ENCODE measurements at regions of chr16 and their contacts with region 1.

Region 1: GRCh38 chr16:11105038-11105903 is 150.7 kb downstream of the SOCS1 start:
- DNase-seq: peak in 2 of 3 donors; percentile 51 to 61
- ATAC-seq: peak; percentile 79 to 82
- H3K4me3 ChIP-seq: no peak overlapping the region
- H3K27ac ChIP-seq: peak overlapping the region; percentile 84
- H3K4me1 ChIP-seq: peaks cover 19% of the 10 kb centered on the region
- H3K27me3 ChIP-seq: no peaks in the 10 kb centered on the region

Region 2: DNA sequence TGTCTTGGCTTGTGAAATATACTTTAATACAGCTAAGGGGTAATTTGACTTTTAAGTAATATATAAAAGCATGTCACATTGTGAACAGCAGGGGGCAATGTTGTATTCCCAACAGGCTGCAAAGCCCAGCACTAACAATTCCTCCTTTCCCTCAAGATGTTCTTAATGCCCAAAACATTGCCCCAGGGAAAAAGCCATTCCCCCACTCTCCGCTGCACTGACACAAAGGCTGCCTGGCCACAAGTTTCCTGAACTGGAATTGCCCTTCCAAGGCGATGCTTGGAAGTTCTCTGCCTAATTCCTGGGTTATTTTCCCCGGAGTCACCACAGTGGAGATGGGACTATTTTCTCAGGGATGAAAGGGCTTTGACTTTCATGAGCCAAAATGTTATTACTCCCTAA is 133.7 kb before region 1 on chr16:
- intact Hi-C with region 1: loop called in 1 of 4 experiments (anchors 10 kb)
- DNase-seq: peak in 1 of 3 donors; percentile 32
- ATAC-seq: peak; percentile 61 to 68
- H3K4me3 ChIP-seq: no peak overlapping the region
- H3K27ac ChIP-seq: no peak overlapping the region
- H3K4me1 ChIP-seq: peaks cover 3% of the 10 kb centered on the region
- H3K27me3 ChIP-seq: no peaks in the 10 kb centered on the region

Region 3: DNA sequence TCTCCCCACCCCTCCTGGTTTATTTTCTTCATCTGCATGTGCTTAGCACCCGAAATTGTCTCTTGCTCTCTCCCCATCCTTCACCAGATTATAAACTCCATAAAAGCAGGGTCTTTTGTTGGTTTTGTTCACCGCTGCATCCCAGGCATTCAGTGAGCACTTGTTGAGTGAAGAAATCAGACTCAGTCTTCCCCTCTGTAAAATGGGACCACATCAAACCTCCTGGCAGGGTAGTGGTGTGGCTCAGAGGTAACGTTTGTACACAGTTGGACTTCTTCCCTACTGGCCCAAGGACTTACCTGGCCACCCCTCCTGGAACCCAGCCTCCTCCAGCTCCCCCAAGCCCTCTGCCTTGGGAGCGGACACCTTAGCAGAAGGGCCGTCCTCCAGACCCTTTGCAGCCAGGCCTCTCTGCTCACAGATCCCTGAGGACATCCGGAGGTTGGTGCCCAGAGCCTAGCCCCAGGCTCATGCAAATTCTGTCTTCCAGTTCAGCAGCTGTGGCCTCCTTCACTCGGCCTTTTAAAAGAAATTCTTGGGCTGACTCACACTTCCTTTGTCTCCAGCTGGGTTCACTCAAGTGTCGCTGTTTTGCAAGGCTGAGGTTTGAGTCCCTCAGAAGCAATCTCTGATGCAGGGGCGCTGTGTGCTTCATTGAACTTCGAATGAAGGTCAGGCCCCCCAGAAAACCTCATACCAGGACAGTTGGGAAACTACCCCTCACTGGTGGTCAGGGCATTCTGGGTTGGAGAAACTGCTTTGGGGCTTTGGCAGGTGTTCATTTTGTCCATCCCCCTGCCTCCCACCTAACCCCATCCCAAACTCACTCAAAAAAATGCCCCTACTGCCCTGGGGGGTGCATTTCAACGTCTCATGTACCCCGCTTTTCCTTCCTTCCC is 223.2 kb after region 1 on chr16:
- intact Hi-C with region 1: no loop called
- DNase-seq: peak; percentile 79 to 86 (median 85)
- ATAC-seq: peak; percentile 87 to 90
- H3K4me3 ChIP-seq: no peak overlapping the region
- H3K27ac ChIP-seq: no peak overlapping the region
- H3K4me1 ChIP-seq: no peaks in the 10 kb centered on the region
- H3K27me3 ChIP-seq: no peaks in the 10 kb centered on the region

Measured in right cardiac atrium (tissue), 5 donors.